ENCODE measurements at regions of chr11 and their contacts with region 1.

Region 1: DNA sequence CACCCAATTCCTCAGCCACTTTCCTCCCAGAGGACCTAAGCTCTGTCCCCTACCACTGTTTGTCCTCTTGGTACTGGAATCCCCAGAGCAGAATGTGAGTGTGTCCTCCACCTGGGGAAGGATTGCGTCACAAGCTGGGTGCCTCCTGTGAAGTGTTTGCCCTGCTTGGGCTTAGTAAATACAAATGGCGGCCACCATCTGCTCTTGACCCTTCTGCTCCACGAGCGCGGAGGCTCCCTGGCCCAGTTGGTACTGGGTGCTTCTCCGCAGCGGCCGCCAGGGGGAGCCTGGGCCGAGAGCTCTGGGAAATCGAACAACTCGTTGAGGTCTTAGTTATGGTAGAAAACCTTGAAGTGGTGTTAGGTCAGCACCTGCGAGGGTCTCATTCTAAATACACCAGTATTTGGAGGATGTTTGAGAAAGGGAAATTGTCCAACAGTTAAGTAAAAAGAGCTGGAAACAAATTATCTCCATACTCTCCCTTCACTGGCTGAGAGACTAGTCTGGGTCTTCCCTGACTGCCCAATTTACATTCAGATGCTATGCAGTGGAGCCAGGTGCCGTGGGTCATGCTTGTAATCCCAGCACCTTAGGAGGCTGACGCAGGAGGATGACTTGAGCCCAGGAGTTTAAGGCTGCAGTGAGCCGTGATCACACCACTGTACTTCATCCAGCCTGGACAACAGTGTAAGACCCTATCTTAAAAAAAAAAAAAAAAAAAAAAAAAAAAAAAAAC is 74.6 kb upstream of the TEAD1 start:
- DNase-seq: peak; percentile 56
- H3K4me3 Mint-ChIP-seq: no peak overlapping the region
- H3K27ac Mint-ChIP-seq: no peak overlapping the region
- H3K4me1 Mint-ChIP-seq: peaks cover 13% of the 10 kb centered on the region
- H3K27me3 Mint-ChIP-seq: peaks cover 19% of the 10 kb centered on the region

Region 2: GRCh38 chr11:12008790-12009616 is 590.6 kb before region 1 on chr11:
- CTCF ChIA-PET with region 1: no interaction called
- POLR2A ChIA-PET with region 1: no interaction called
- intact Hi-C with region 1: loop called (anchors 10 kb)
- DNase-seq: no peak
- H3K4me3 Mint-ChIP-seq: peak overlapping the region; percentile 48
- H3K27ac Mint-ChIP-seq: no peak overlapping the region
- H3K4me1 Mint-ChIP-seq: peaks cover 15% of the 10 kb centered on the region
- H3K27me3 Mint-ChIP-seq: peaks cover 65% of the 10 kb centered on the region

Region 3: GRCh38 chr11:12331239-12331874 is 268.2 kb before region 1 on chr11:
- CTCF ChIA-PET with region 1: interaction called, 11 read pairs
- POLR2A ChIA-PET with region 1: no interaction called
- intact Hi-C with region 1: loop called (anchors 5 kb)
- DNase-seq: peak; percentile 81
- H3K4me3 Mint-ChIP-seq: no peak overlapping the region
- H3K27ac Mint-ChIP-seq: no peak overlapping the region
- H3K4me1 Mint-ChIP-seq: peaks cover 5% of the 10 kb centered on the region
- H3K27me3 Mint-ChIP-seq: no peaks in the 10 kb centered on the region

Region 4: DNA sequence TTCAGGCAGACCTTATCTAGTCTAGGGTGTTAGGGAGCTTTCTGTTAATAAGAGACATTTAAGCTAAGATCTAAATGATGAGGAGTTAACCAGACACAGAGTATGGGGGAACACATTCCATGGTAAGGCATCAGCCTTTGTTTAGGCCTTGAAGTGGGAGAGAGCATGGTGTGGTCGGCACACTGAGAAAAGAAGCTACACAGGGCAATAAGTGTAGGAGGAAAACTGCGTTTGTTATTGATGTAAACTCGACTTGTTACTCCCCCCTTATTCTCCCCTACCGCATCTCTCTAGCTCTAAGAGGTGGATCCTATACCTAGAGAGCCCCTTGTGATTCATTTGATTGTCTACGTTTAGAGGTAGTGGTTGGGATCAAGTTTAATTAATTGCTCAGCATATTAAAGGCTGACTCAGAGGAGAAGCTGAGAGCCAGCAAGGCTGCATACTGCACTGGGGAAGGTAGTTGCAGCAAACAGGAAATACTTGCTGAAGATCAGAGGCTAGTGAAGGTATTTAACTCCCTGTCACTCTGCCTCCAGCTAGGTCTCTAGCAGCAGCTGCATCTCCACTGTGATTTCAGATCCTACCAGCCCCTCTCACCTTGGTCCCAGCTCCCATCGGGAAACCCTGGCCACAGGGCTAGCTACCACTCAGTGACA is 12.1 kb before region 1 on chr11:
- CTCF ChIA-PET with region 1: interaction called, 16 read pairs
- POLR2A ChIA-PET with region 1: no interaction called
- intact Hi-C with region 1: no loop called
- DNase-seq: no peak
- H3K4me3 Mint-ChIP-seq: no peak overlapping the region
- H3K27ac Mint-ChIP-seq: no peak overlapping the region
- H3K4me1 Mint-ChIP-seq: peaks cover 2% of the 10 kb centered on the region
- H3K27me3 Mint-ChIP-seq: peaks cover 8% of the 10 kb centered on the region

Region 5: GRCh38 chr11:12611352-12611751 is 11.8 kb after region 1 on chr11:
- CTCF ChIA-PET with region 1: interaction called, 15 read pairs
- POLR2A ChIA-PET with region 1: no interaction called
- intact Hi-C with region 1: no loop called
- DNase-seq: no peak
- H3K4me3 Mint-ChIP-seq: no peak overlapping the region
- H3K27ac Mint-ChIP-seq: no peak overlapping the region
- H3K4me1 Mint-ChIP-seq: no peaks in the 10 kb centered on the region
- H3K27me3 Mint-ChIP-seq: peaks cover 14% of the 10 kb centered on the region

Region 6: GRCh38 chr11:12888525-12889158 is 289.1 kb after region 1 on chr11:
- CTCF ChIA-PET with region 1: interaction called, 101 read pairs
- POLR2A ChIA-PET with region 1: interaction called, 3 read pairs
- intact Hi-C with region 1: no loop called
- DNase-seq: peak; percentile 77
- H3K4me3 Mint-ChIP-seq: no peak overlapping the region
- H3K27ac Mint-ChIP-seq: no peak overlapping the region
- H3K4me1 Mint-ChIP-seq: no peaks in the 10 kb centered on the region
- H3K27me3 Mint-ChIP-seq: peaks cover 3% of the 10 kb centered on the region

Region 7: DNA sequence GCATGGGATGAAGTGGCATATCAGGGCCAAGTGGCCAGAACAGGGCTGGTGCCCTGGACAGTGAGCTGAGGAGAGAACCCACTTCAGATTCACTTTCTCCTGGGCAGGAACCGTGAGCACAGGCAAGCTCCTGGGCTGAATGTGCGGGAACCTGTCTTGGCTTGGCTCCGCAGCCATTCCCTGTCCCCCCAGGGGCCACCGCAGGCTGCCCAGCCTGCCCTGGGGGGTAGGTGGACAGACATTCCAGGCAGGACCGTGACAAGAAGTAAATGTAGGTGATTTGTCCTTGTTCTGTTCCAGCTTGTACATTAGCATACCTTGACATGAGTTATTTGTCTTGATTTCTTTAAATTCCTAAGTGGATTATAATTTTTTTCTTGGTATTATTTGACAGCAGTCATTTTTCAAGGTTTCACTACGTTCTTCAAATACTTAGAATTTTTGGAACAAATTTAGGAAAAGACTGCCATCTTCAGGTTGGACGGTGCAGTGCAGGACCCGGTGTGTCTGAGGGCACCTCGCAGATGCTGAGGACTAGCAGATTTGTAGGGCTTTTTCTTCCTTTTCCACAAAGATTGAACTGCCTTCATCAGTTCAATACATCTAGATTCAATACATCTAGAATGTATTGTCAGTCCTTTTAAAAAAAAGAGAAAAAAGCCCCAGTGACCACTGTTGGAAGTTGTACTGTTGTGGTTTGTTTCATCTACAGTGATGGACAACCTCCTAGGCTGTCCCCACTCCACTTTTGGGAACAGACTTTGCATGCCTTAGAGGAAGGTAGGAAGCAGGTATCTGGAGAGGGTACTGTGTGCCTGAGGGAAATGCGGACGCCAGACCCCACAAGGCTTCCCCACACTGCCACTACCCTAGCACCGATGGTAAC is 294.5 kb after region 1 on chr11:
- CTCF ChIA-PET with region 1: interaction called, 101 read pairs
- POLR2A ChIA-PET with region 1: interaction called, 3 read pairs
- intact Hi-C with region 1: loop called (anchors 1 kb)
- DNase-seq: peak; percentile 66
- H3K4me3 Mint-ChIP-seq: no peak overlapping the region
- H3K27ac Mint-ChIP-seq: no peak overlapping the region
- H3K4me1 Mint-ChIP-seq: no peaks in the 10 kb centered on the region
- H3K27me3 Mint-ChIP-seq: peaks cover 1% of the 10 kb centered on the region

Measured in activated CD4-positive, alpha-beta memory T cell treated with anti-CD3 and anti-CD28 coated beads for 36 hours (primary cell).